ENCODE measurements at regions of chr4 and their contacts with region 1.

Region 1: GRCh38 chr4:68359508-68359907 is 9.6 kb upstream of the YTHDC1 start:
- DNase-seq: no peak
- H3K4me3 Mint-ChIP-seq: no peak overlapping the region
- H3K27ac Mint-ChIP-seq: peak overlapping the region; percentile 12
- H3K4me1 Mint-ChIP-seq: peaks cover 20% of the 10 kb centered on the region
- H3K27me3 Mint-ChIP-seq: no peaks in the 10 kb centered on the region
- CTCF ChIP-seq: no peak

Region 2: GRCh38 chr4:68180849-68181526 is 178.5 kb before region 1 on chr4:
- CTCF ChIA-PET with region 1: no interaction called
- POLR2A ChIA-PET with region 1: no interaction called
- intact Hi-C with region 1: no loop called
- DNase-seq: peak; percentile 67
- H3K4me3 Mint-ChIP-seq: no peak overlapping the region
- H3K27ac Mint-ChIP-seq: peak overlapping the region; percentile 92
- H3K4me1 Mint-ChIP-seq: peaks cover 6% of the 10 kb centered on the region
- H3K27me3 Mint-ChIP-seq: no peaks in the 10 kb centered on the region
- CTCF ChIP-seq: no peak

Region 3: DNA sequence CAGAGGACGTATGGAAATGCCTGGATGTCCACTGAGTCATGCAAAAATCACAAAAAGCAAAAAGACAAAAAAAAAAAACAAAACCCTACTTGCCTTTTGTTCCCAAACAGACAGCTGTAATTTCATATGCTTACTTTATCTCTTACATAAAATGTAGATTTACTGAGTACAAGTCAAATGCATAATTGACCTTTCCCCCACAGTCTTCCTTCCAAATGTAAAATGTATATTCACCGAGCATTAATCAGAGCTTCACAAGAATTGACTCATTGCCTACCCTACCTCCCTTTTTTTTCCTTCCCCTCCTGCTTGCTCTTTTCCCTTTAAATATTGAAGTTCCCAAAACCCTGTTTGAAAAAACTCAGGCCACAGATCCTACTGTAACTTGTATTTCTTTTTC is 81.5 kb before region 1 on chr4:
- CTCF ChIA-PET with region 1: no interaction called
- POLR2A ChIA-PET with region 1: no interaction called
- intact Hi-C with region 1: no loop called
- DNase-seq: no peak
- H3K4me3 Mint-ChIP-seq: no peak overlapping the region
- H3K27ac Mint-ChIP-seq: no peak overlapping the region
- H3K4me1 Mint-ChIP-seq: peaks cover 6% of the 10 kb centered on the region
- H3K27me3 Mint-ChIP-seq: no peaks in the 10 kb centered on the region
- CTCF ChIP-seq: no peak

Region 4: GRCh38 chr4:68342134-68342533 is 17.4 kb before region 1 on chr4:
- CTCF ChIA-PET with region 1: interaction called, 7 read pairs
- POLR2A ChIA-PET with region 1: interaction called, 136 read pairs
- intact Hi-C with region 1: loop called (anchors 1 kb)
- DNase-seq: peak; percentile 74
- H3K4me3 Mint-ChIP-seq: peak overlapping the region; percentile 31
- H3K27ac Mint-ChIP-seq: peak overlapping the region; percentile 90
- H3K4me1 Mint-ChIP-seq: peaks cover 27% of the 10 kb centered on the region
- H3K27me3 Mint-ChIP-seq: no peaks in the 10 kb centered on the region
- CTCF ChIP-seq: no peak

Region 5: GRCh38 chr4:68855771-68856170 is 496.3 kb after region 1 on chr4:
- CTCF ChIA-PET with region 1: no interaction called
- POLR2A ChIA-PET with region 1: no interaction called
- intact Hi-C with region 1: no loop called
- DNase-seq: no peak
- H3K4me3 Mint-ChIP-seq: no peak overlapping the region
- H3K27ac Mint-ChIP-seq: no peak overlapping the region
- H3K4me1 Mint-ChIP-seq: no peaks in the 10 kb centered on the region
- H3K27me3 Mint-ChIP-seq: no peaks in the 10 kb centered on the region
- CTCF ChIP-seq: no peak

Measured in MCF 10A (cell line).